PC-9 (cell line): ENCODE measurements at regions of chr3 and their contacts with region 1.

Region 1: GRCh38 chr3:190345027-190345821 is 23.0 kb upstream of the CLDN1 start:
- DNase-seq: peak; percentile 79 to 100
- H3K4me3 ChIP-seq: peak overlapping the region; percentile 50; the same call in 1 of the 2 replicates
- H3K27ac ChIP-seq: peak overlapping the region; percentile 98
- H3K4me1 ChIP-seq: peaks cover 40% of the 10 kb centered on the region
- H3K27me3 ChIP-seq: no peaks in the 10 kb centered on the region
- CTCF ChIP-seq: no peak

Region 2: DNA sequence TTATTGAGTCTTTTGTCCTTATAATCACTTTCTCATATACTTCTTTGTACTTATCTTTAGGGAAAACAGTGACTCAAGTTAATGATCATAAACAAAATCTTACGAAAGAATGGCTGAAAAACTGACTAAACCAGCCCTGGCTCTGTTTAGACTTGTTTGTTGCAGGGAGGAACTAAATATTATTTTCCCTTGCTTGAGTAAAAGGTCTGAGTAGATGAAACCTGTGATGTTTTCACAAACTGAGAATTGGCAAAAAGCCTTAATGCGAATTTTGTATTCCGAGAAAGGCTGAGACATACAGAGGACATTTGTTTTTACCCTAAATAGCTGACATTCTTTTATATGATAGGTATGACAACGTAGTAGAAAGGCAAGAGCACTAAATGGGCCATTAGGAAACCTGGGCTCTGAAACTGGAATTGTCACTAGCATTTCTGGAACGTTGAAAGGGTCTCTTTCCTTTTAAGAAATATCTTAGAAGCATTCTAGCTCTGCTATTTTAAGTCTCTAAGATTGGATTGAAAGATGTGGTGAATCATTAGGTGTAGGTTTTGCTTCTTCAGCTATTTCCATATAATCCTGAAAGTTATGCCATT is 24.6 kb after region 1 on chr3:
- CTCF ChIA-PET with region 1: interaction called, 3 read pairs
- POLR2A ChIA-PET with region 1: no interaction called
- intact Hi-C with region 1: loop called (anchors 1 kb)
- DNase-seq: peak; percentile 27 to 86
- H3K4me3 ChIP-seq: peak overlapping the region; percentile 5; the same call in 1 of the 2 replicates
- H3K27ac ChIP-seq: peak overlapping the region; percentile 80
- H3K4me1 ChIP-seq: peaks cover 45% of the 10 kb centered on the region
- H3K27me3 ChIP-seq: no peaks in the 10 kb centered on the region
- CTCF ChIP-seq: no peak